Activated T-helper 2 cell treated with anti-CD3 and anti-CD28 coated beads, Interferon-gamma antibody, Interleukin-2, Interleukin-4, amounts not matched to agents 10 μg/mL and 5 μg/mL and 100 μg/mL, durations not matched to agents 14 hours and 24 hours and 36 hours (primary cell): ENCODE measurements at regions of chr2 and their contacts with region 1.

Region 1: DNA sequence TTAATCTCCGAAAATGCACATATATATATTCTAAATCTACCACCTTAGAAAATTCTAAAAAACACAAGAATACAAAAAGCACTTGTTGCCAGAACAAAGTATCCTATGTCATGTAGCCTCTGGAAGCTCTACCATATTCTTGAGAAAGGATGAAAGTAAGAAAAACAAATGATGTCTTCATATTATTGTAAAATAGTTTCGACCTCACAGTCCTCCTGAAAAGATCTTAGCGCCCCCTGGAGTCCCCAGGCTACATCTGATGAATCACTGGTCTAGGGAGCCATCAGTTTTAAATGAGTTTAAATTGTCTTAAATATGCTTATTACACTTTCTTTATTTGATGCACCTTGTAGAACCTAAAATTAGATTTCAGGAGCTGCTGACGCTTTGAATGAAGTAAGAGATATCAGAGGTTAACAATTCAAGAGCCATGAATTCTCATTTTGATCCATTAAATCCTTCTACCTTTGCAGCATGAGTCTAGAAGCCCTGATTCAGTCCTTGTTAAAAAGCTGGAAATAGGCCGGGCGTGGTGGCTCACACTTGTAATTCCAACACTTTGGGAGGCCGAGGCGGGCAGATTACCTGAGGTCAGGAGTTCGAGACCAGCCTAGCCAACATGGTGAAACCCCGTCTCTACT is 138.8 kb downstream of the MCFD2 start:
- DNase-seq: peak; percentile 20
- H3K4me3 Mint-ChIP-seq: no peak overlapping the region
- H3K27ac Mint-ChIP-seq: no peak overlapping the region
- H3K4me1 Mint-ChIP-seq: peaks cover 1% of the 10 kb centered on the region
- H3K27me3 Mint-ChIP-seq: peaks cover 7% of the 10 kb centered on the region

Region 2: GRCh38 chr2:46657042-46657504 is 119.7 kb before region 1 on chr2:
- intact Hi-C with region 1: loop called (anchors 2 kb)
- DNase-seq: no peak
- H3K4me3 Mint-ChIP-seq: no peak overlapping the region
- H3K27ac Mint-ChIP-seq: no peak overlapping the region
- H3K4me1 Mint-ChIP-seq: no peaks in the 10 kb centered on the region
- H3K27me3 Mint-ChIP-seq: peaks cover 24% of the 10 kb centered on the region

Region 3: GRCh38 chr2:47422560-47422959 is 645.8 kb after region 1 on chr2:
- intact Hi-C with region 1: no loop called
- DNase-seq: no peak
- H3K4me3 Mint-ChIP-seq: no peak overlapping the region
- H3K27ac Mint-ChIP-seq: no peak overlapping the region
- H3K4me1 Mint-ChIP-seq: no peaks in the 10 kb centered on the region
- H3K27me3 Mint-ChIP-seq: no peaks in the 10 kb centered on the region